ENCODE measurements at regions of chr16 and their contacts with region 1.

Region 1: GRCh38 chr16:70395345-70395901 is 43.5 kb downstream of the ST3GAL2 start:
- DNase-seq: peak; percentile 21
- H3K4me3 ChIP-seq: no peak overlapping the region
- H3K27ac ChIP-seq: no peak overlapping the region
- H3K4me1 ChIP-seq: peaks cover 19% of the 10 kb centered on the region
- H3K27me3 ChIP-seq: no peaks in the 10 kb centered on the region
- CTCF ChIP-seq: peak; percentile 63 to 78

Region 2: DNA sequence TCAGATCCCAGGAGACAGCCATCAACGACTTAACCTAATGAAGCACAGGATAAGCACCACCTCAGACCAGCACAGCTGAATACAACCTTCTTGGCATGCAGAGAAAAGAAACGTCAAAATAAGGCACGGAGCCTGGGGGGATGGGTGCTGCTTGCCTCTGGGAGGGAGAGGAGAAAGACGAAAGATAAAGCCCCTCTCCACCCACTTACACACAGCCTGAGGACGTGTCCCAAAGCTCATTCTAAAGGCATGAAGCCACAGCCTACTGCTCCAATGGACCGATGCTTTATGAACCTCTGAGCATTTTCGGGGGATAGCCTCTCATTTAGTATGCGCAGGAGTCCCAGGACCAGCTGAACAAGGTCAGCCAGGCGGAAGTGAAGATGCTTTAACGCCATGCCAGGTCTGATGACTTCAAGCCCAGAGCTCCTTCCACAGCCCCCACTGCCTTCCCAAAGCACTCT is 12.4 kb after region 1 on chr16:
- CTCF ChIA-PET with region 1: no interaction called
- dilution Hi-C with region 1: no loop called
- in situ Hi-C with region 1: no loop called
- intact Hi-C with region 1: no loop called
- DNase-seq: no peak
- H3K4me3 ChIP-seq: no peak overlapping the region
- H3K27ac ChIP-seq: no peak overlapping the region
- H3K4me1 ChIP-seq: peaks cover 19% of the 10 kb centered on the region
- H3K27me3 ChIP-seq: no peaks in the 10 kb centered on the region
- CTCF ChIP-seq: no peak

Region 3: GRCh38 chr16:70470927-70471341 is 75.5 kb after region 1 on chr16:
- CTCF ChIA-PET with region 1: interaction called, 4 read pairs
- dilution Hi-C with region 1: loop called (anchors 5 kb)
- in situ Hi-C with region 1: no loop called
- intact Hi-C with region 1: loop called (anchors 5 kb)
- DNase-seq: no peak
- H3K4me3 ChIP-seq: no peak overlapping the region
- H3K27ac ChIP-seq: no peak overlapping the region
- H3K4me1 ChIP-seq: peaks cover 13% of the 10 kb centered on the region
- H3K27me3 ChIP-seq: no peaks in the 10 kb centered on the region
- CTCF ChIP-seq: peak in 1 of 2 donors; percentile 46

Region 4: DNA sequence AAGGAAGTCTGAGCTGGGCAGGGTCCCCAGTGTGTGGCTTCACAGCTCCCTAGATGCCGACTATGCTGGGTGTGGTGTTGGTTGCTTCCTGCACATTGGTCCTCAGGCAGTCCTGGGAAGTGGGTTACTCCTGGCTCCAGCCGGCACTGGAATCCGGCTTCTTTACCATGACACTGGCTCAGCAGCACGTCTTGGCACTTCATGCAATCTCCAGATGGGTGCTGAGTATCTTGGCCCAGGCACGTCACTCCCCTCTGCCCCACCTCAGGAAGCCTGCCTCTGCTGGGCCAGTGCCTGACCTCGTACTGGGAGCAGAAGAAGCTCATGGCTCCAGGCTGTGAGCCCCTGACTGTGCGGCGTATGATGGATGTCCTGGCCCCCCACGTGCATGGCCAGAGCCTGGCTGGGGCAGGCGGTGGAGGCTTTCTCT is 83.5 kb after region 1 on chr16:
- CTCF ChIA-PET with region 1: no interaction called
- dilution Hi-C with region 1: loop called (anchors 5 kb)
- in situ Hi-C with region 1: no loop called
- intact Hi-C with region 1: loop called (anchors 5 kb)
- DNase-seq: no peak
- H3K4me3 ChIP-seq: no peak overlapping the region
- H3K27ac ChIP-seq: no peak overlapping the region
- H3K4me1 ChIP-seq: peaks cover 40% of the 10 kb centered on the region
- H3K27me3 ChIP-seq: no peaks in the 10 kb centered on the region
- CTCF ChIP-seq: no peak

Measured in mammary epithelial cell (primary cell).